ENCODE measurements at regions of chr15 and their contacts with region 1.

Region 1: GRCh38 chr15:77031376-77032050 is 36.6 kb downstream of the PSTPIP1 start:
- DNase-seq: peak; percentile 70 to 93 (median 92)
- H3K4me3 ChIP-seq: no peak overlapping the region
- H3K27ac ChIP-seq: no peak overlapping the region
- H3K4me1 ChIP-seq: peaks cover 0 to 38% (median 9%) of the 10 kb centered on the region in 4 experiments
- H3K27me3 ChIP-seq: no peaks in the 10 kb centered on the region

Region 2: DNA sequence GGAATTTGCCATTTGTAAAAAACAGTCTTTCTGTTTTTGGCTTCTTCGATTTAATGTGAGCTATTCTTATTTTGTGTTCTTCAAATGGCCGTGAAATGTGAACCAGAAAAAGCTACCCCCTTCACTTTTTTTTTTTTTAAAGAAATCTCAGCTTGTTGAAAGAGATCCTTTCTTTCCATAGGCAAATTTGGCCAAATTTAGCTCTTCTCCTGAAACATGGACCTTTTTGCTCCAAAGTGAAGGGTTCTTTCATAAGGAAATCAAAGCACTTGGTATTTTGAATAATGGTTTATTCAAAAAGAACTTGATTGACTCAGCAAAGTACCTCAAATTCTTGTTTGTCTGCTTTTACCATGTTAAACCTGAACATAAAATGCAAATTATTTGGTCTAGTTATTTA is 89.9 kb before region 1 on chr15:
- CTCF ChIA-PET with region 1: interaction called, 11 read pairs
- POLR2A ChIA-PET with region 1: interaction called, 3 read pairs
- DNase-seq: no peak
- H3K4me3 ChIP-seq: no peak overlapping the region
- H3K27ac ChIP-seq: no peak overlapping the region
- H3K4me1 ChIP-seq: no peaks in the 10 kb centered on the region
- H3K27me3 ChIP-seq: no peaks in the 10 kb centered on the region

Region 3: DNA sequence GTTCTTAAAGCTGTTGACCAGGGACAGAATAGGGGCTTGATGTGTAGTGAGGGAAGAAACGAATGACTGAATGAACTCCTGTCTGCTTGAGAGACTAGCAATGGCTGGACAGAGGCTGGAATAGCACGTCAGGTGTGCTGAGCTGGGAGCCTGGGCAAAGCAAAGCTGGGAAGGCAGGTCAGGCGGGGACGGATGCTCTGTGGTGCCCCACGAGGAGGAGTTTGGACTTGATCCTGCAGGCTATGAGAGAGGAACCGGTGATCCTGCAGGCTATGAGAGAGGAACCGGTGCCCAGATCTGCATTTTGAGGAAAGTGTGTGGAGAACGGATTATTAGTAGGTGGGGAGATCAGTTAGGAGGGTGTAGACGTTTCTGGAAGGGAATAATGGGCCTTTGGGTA is 67.9 kb before region 1 on chr15:
- CTCF ChIA-PET with region 1: interaction called, 269 read pairs
- POLR2A ChIA-PET with region 1: no interaction called
- DNase-seq: no peak
- H3K4me3 ChIP-seq: no peak overlapping the region
- H3K27ac ChIP-seq: no peak overlapping the region
- H3K4me1 ChIP-seq: no peaks in the 10 kb centered on the region
- H3K27me3 ChIP-seq: peaks cover 0 to 3% (median 0%) of the 10 kb centered on the region in 5 experiments

Region 4: GRCh38 chr15:77292969-77293558 is 261.6 kb after region 1 on chr15:
- CTCF ChIA-PET with region 1: no interaction called
- POLR2A ChIA-PET with region 1: no interaction called
- DNase-seq: no peak
- H3K4me3 ChIP-seq: no peak overlapping the region
- H3K27ac ChIP-seq: no peak overlapping the region
- H3K4me1 ChIP-seq: no peaks in the 10 kb centered on the region
- H3K27me3 ChIP-seq: no peaks in the 10 kb centered on the region